CD14-positive monocyte (primary cell): ENCODE measurements at regions of chr12 and their contacts with region 1.

Region 1: GRCh38 chr12:40224439-40225291 is at the start of gene LRRK2:
- DNase-seq: peak; percentile 79 to 82 (median 79)
- H3K4me3 ChIP-seq: peak within 1 kb of the TSS; percentile 93 to 99 (median 97)
- H3K4me3 Mint-ChIP-seq: peak within 1 kb of the TSS; percentile 89 to 98
- H3K27ac ChIP-seq: peak within 1 kb of the TSS; percentile 74 to 86
- H3K27ac Mint-ChIP-seq: peak within 1 kb of the TSS; percentile 96 to 99 (median 98)
- H3K4me1 ChIP-seq: peaks cover 40 to 73% of the 10 kb centered on the region in 2 donors
- H3K4me1 Mint-ChIP-seq: peaks cover 47% of the 10 kb centered on the region
- H3K27me3 ChIP-seq: no peaks in the 10 kb centered on the region
- H3K27me3 Mint-ChIP-seq: peaks cover 0 to 3% (median 0%) of the 10 kb centered on the region in 3 donors
- CTCF ChIP-seq: no peak
- polyA plus RNA-seq, gene LRRK2: 47.7 to 67.2 (median 47.9) TPM

Region 2: GRCh38 chr12:40107098-40107802 is 117.4 kb before region 1 on chr12:
- intact Hi-C with region 1: loop called in 1 of 2 experiments (anchors 5 kb)
- DNase-seq: peak; percentile 60 to 77 (median 68)
- H3K4me3 ChIP-seq: peak overlapping the region in 1 of 3 experiments; percentile 52
- H3K4me3 Mint-ChIP-seq: peak overlapping the region; percentile 55 to 69
- H3K27ac ChIP-seq: no peak overlapping the region
- H3K27ac Mint-ChIP-seq: no peak overlapping the region
- H3K4me1 ChIP-seq: peaks cover 26 to 32% of the 10 kb centered on the region in 2 donors
- H3K4me1 Mint-ChIP-seq: peaks cover 39% of the 10 kb centered on the region
- H3K27me3 ChIP-seq: peaks cover 0 to 3% of the 10 kb centered on the region in 2 donors
- H3K27me3 Mint-ChIP-seq: peaks cover 6 to 11% (median 7%) of the 10 kb centered on the region in 3 donors
- CTCF ChIP-seq: peak; percentile 97

Region 3: DNA sequence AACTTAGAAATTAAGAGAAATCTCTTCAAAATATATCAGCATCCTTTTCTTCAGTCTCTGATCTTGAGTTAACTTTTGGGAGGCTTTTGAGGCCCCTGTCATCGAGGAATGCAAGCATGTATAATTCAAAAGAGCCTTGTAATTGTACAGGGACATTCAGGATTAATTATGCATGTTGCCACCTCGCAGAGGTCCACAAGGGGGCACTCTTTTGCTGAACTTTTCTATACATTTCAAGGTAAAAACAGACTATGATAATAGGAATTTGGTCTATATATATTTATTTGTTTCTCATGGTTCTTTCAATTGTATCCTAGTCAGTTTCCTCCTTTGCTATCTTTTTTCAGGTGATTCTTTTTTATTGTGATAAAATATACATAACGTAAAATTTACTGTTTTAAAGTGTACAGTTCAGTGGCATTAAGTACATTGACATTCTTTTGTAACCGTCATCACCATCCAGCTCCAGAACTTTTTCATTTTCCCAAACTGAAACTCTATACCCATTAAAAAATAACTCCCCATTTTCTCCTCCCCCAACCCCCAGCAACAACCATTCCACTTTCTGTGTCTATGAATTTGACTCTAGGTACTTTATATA is 71.8 kb before region 1 on chr12:
- intact Hi-C with region 1: loop called (anchors 5 kb)
- DNase-seq: peak; percentile 48 to 69 (median 66)
- H3K4me3 ChIP-seq: peak overlapping the region in 1 of 3 experiments; percentile 17
- H3K4me3 Mint-ChIP-seq: peak overlapping the region in 1 of 2 donors; percentile 48
- H3K27ac ChIP-seq: peak overlapping the region in 1 of 2 donors; percentile 59
- H3K27ac Mint-ChIP-seq: peak overlapping the region in 6 of 7 donors; percentile 24 to 92 (median 60)
- H3K4me1 ChIP-seq: peaks cover 41 to 49% of the 10 kb centered on the region in 2 donors
- H3K4me1 Mint-ChIP-seq: peaks cover 44% of the 10 kb centered on the region
- H3K27me3 ChIP-seq: no peaks in the 10 kb centered on the region
- H3K27me3 Mint-ChIP-seq: no peaks in the 10 kb centered on the region
- CTCF ChIP-seq: peak; percentile 89

Region 4: DNA sequence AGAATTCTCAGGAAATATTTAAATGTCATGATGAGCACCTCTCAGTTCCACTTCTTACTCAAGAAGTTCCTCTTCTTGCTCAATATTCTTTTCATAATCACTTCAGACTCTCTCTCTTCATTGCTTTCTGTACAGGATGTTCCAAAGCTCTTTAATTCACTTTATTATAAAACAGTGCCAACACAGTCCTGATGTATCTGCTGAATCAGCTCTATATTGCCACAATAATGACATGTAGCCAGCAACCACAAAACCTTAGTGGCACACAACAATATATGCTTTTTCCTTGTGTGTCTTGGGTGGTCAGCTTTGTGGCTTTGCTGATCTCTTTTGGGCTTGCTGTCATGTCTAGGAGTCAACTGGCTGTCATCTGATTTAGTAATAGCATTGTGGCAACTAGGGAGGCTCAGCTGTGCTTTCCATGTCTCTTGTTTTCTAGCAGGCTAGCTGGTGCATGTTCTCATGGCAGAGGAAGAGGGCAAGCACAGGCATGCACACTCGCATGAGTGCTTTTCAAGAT is 66.0 kb before region 1 on chr12:
- intact Hi-C with region 1: loop called (anchors 5 kb)
- DNase-seq: peak; percentile 69 to 88 (median 83)
- H3K4me3 ChIP-seq: peak overlapping the region; percentile 15 to 66 (median 44)
- H3K4me3 Mint-ChIP-seq: peak overlapping the region; percentile 45 to 83
- H3K27ac ChIP-seq: peak overlapping the region; percentile 61 to 89
- H3K27ac Mint-ChIP-seq: peak overlapping the region; percentile 89 to 97 (median 96)
- H3K4me1 ChIP-seq: peaks cover 45 to 63% of the 10 kb centered on the region in 2 donors
- H3K4me1 Mint-ChIP-seq: peaks cover 44% of the 10 kb centered on the region
- H3K27me3 ChIP-seq: no peaks in the 10 kb centered on the region
- H3K27me3 Mint-ChIP-seq: no peaks in the 10 kb centered on the region
- CTCF ChIP-seq: no peak

Region 5: GRCh38 chr12:40208707-40209446 is 15.8 kb before region 1 on chr12:
- intact Hi-C with region 1: loop called in 1 of 2 experiments (anchors 2 kb)
- DNase-seq: peak; percentile 85 to 95 (median 92)
- H3K4me3 ChIP-seq: peak overlapping the region in 2 of 3 experiments; percentile 41 to 69
- H3K4me3 Mint-ChIP-seq: peak overlapping the region; percentile 47 to 77
- H3K27ac ChIP-seq: peak overlapping the region; percentile 82 to 89
- H3K27ac Mint-ChIP-seq: peak overlapping the region; percentile 93 to 99 (median 96)
- H3K4me1 ChIP-seq: peaks cover 47 to 61% of the 10 kb centered on the region in 2 donors
- H3K4me1 Mint-ChIP-seq: peaks cover 39% of the 10 kb centered on the region
- H3K27me3 ChIP-seq: no peaks in the 10 kb centered on the region
- H3K27me3 Mint-ChIP-seq: no peaks in the 10 kb centered on the region
- CTCF ChIP-seq: no peak